SK-N-SH (cell line): ENCODE measurements at regions of chr20 and their contacts with region 1.

Region 1: DNA sequence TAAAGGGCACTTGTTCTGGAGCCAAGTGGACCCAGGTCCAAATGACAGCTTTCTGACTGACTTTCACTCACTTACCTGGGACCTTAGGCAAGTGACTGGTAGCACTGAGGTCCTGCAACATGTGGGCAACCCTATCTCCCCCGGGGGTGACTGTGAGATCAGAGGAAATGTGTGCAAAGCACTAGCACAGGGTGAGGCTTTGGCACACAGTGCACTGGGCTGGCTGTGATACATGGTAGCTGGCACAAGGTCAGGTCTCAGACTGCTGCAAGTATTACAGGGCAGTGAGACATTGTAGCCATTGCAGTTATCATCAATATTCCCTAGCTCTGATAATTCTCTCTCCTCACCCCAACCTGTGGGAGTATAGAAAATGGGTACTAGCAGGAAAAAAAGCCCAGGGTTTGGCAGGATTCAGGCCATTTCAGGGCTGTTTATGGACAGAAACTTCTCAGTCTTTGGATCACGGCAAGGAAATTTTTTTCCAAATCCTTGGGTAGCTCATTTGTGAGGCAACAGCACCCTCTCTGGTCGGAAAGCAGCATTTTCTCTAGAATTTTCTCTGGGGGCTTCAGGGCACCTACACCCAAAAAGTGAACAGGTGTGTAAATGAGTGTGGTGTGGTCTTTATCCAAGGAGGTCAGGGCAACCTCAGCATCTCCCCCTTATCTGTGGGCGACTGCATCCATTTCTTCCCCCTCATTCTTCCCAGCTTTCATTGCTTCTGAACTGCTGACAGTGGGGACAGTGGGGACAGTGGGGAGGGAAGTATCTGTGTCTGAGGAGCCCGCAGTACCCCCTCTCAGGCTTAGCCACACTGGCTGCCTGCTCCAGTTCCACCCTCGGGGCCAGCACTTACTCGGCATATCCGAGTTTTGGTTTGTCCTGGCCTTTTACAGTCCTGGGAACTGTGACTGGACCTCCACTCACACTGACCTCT is 148.7 kb upstream of the PHACTR3 start:
- DNase-seq: peak; percentile 77
- H3K4me3 ChIP-seq: peak overlapping the region in 1 of 2 experiments; percentile 48; a peak in 1 of 4 replicates
- H3K27ac ChIP-seq: peak overlapping the region in 1 of 2 experiments; percentile 74; a peak in 2 of 4 replicates
- H3K4me1 ChIP-seq: peaks cover 0 to 24% of the 10 kb centered on the region in 2 experiments; a peak in 1 of 4 replicates
- H3K27me3 ChIP-seq: no peaks in the 10 kb centered on the region
- CTCF ChIP-seq: peak; percentile 81
- EP300 ChIP-seq: no peak
- RAD21 ChIP-seq: peak; percentile 89

Region 2: GRCh38 chr20:58870239-58871014 is 585.2 kb before region 1 on chr20:
- CTCF ChIA-PET with region 1: interaction called, 66 read pairs
- POLR2A ChIA-PET with region 1: no interaction called
- DNase-seq: peak; percentile 80
- H3K4me3 ChIP-seq: peak overlapping the region in 1 of 2 experiments; percentile 19; a peak in 1 of 4 replicates
- H3K27ac ChIP-seq: no peak overlapping the region; a peak in 1 of 4 replicates
- H3K4me1 ChIP-seq: peaks cover 0 to 14% of the 10 kb centered on the region in 2 experiments; a peak in 1 of 4 replicates
- H3K27me3 ChIP-seq: no peaks in the 10 kb centered on the region
- CTCF ChIP-seq: peak; percentile 92
- EP300 ChIP-seq: no peak
- RAD21 ChIP-seq: peak; percentile 96

Region 3: GRCh38 chr20:59087829-59088433 is 367.7 kb before region 1 on chr20:
- CTCF ChIA-PET with region 1: interaction called, 11 read pairs
- POLR2A ChIA-PET with region 1: no interaction called
- DNase-seq: peak; percentile 55
- H3K4me3 ChIP-seq: peak overlapping the region in 1 of 2 experiments; percentile 39; a peak in 1 of 4 replicates
- H3K27ac ChIP-seq: no peak overlapping the region
- H3K4me1 ChIP-seq: peaks cover 0 to 3% of the 10 kb centered on the region in 2 experiments; a peak in 2 of 4 replicates
- H3K27me3 ChIP-seq: no peaks in the 10 kb centered on the region
- CTCF ChIP-seq: peak; percentile 90
- EP300 ChIP-seq: no peak
- RAD21 ChIP-seq: peak; percentile 71

Region 4: DNA sequence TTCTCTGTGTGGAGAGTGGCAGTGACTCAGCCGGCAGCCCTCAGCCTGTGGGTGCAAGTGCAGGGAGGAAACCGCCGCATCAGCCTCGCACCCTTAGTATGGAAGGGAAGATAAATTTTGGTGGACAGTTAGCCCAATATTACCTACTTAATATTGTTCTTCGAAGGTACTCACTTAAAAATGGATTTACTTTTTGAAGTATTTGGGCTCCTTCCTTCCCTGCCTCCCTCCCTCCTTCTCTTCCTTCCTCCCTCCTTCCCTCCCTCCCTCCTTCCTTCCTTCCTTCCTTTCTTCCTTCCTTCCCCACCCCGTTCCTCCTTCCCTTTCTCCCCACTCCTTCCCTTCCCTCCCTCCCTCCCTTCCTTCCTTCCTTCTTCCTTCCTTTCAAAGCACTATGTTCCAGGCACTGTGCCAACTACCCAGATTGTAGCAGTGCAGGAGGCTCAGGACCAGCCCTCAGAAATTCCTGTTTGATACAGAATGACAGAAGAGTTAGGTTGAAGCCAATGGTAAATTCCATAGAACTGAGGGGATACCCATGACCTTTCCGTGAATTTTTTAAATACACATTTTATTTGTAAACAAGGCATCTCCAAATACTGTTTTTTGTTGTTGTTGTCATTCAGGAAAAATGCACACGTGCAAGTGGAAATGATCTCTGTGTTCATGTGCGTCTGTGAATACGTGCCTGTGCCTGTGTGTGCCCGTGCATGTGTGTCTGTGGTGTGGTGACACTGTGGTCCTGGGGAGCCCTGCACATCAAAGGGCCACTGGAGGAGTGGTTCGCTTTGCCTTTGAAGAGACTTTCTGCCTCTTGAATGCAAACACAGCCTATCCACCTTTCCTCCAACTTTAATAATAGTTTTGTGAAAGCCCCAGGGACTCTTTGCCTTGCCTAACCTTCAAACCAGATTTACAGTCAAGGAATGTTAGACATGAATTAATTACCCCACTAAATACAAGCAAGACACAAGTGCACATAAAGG is 13.5 kb before region 1 on chr20:
- CTCF ChIA-PET with region 1: interaction called, 45 read pairs
- POLR2A ChIA-PET with region 1: interaction called, 5 read pairs
- DNase-seq: peak; percentile 44
- H3K4me3 ChIP-seq: no peak overlapping the region
- H3K27ac ChIP-seq: peak overlapping the region in 1 of 2 experiments; percentile 58; a peak in 1 of 4 replicates
- H3K4me1 ChIP-seq: peaks cover 9 to 50% of the 10 kb centered on the region in 2 experiments; a peak in 3 of 4 replicates
- H3K27me3 ChIP-seq: no peaks in the 10 kb centered on the region
- CTCF ChIP-seq: no peak
- EP300 ChIP-seq: no peak
- RAD21 ChIP-seq: no peak

Region 5: DNA sequence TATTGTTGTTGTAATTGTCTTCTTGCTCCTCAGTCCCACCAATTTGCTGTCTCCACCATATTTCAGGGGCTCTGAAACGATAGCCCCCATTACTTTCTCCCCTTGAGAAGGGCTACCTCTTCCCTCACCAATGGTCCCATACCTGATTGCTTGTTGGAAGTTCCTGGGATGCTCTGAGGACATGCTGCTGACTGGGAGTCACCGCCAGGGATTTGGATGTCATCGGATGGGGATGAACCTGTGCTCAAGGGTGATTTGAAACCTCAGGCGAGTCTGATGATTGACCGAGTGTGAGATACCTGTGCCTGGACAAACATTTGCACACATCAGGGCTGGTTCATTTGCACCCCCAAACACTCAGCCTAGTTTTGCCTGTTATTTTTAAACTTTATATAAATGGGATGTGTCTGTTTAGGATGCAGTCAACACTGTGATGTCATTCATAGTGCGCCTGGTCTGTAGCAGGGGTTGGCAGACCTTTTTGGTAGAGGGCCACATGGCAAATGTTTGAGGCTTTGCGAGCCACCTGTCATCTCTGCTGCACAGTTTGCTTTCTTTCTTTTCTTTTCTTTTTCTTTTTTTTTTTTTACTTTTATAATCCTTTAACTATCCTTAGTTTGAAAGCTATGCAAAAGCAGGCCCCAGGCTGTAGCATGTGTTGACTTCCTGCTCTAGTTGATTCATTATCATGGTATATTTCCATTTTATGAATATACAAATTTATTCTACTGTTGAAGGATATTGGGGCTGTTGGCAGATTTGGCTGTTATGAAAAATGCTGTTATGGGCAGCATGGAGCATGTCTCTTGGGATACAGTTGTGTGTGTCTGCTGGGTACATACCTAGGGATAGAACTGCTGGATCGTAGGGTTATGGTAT is 30.1 kb after region 1 on chr20:
- CTCF ChIA-PET with region 1: interaction called, 12 read pairs
- POLR2A ChIA-PET with region 1: no interaction called
- DNase-seq: no peak
- H3K4me3 ChIP-seq: no peak overlapping the region
- H3K27ac ChIP-seq: no peak overlapping the region
- H3K4me1 ChIP-seq: peaks cover 0 to 2% of the 10 kb centered on the region in 2 experiments; a peak in 1 of 4 replicates
- H3K27me3 ChIP-seq: no peaks in the 10 kb centered on the region
- CTCF ChIP-seq: no peak
- EP300 ChIP-seq: no peak
- RAD21 ChIP-seq: no peak